ENCODE measurements at regions of chr3 and their contacts with region 1.

Region 1: DNA sequence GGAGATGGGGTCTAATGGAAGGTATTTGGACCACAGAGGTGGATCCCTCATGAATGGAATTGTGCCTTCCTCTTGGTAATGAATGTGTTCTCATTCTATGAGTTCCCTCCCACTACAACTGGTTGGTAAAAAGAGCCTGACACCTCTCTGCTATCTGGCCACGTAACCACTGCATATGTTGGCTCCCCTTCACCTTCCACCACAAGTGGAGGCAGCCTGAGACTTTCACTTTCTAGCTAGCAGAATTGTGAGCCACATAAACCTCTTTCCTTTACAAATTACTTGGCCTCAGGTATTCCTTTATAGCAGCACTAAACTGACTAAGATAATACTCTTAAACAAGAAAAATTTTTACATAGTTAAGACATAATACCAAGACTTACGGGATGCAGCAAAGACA is 155.3 kb downstream of the NR1I2 start:
- DNase-seq: peak; percentile 65
- H3K4me3 Mint-ChIP-seq: peak overlapping the region; percentile 31
- H3K27ac Mint-ChIP-seq: peak overlapping the region; percentile 5
- H3K4me1 Mint-ChIP-seq: peaks cover 42% of the 10 kb centered on the region
- H3K27me3 Mint-ChIP-seq: no peaks in the 10 kb centered on the region

Region 2: DNA sequence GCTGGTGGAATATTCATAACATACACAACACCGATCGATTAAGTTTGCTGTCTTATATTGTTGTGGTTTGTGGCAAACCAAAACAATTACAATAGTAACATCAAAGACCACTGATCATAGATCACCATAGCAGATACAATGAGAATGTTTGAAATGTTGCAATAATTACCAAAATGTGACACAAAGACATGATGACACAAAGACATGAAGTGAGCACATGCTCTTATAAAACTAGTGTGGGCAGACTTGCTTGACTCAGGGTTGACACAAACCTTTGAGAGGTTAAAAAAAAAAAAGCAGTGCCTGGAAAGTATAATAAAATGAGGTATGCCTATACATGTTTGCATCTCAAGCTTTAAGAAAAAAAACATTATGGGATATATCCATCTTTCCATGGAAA is 25.0 kb before region 1 on chr3:
- CTCF ChIA-PET with region 1: no interaction called
- intact Hi-C with region 1: loop called (anchors 2 kb)
- DNase-seq: no peak
- H3K4me3 Mint-ChIP-seq: no peak overlapping the region
- H3K27ac Mint-ChIP-seq: peak overlapping the region; percentile 77
- H3K4me1 Mint-ChIP-seq: peaks cover 33% of the 10 kb centered on the region
- H3K27me3 Mint-ChIP-seq: no peaks in the 10 kb centered on the region

Region 3: GRCh38 chr3:119918992-119919933 is 18.0 kb before region 1 on chr3:
- CTCF ChIA-PET with region 1: no interaction called
- intact Hi-C with region 1: loop called (anchors 1 kb)
- DNase-seq: no peak
- H3K4me3 Mint-ChIP-seq: no peak overlapping the region
- H3K27ac Mint-ChIP-seq: no peak overlapping the region
- H3K4me1 Mint-ChIP-seq: peaks cover 20% of the 10 kb centered on the region
- H3K27me3 Mint-ChIP-seq: no peaks in the 10 kb centered on the region

Region 4: DNA sequence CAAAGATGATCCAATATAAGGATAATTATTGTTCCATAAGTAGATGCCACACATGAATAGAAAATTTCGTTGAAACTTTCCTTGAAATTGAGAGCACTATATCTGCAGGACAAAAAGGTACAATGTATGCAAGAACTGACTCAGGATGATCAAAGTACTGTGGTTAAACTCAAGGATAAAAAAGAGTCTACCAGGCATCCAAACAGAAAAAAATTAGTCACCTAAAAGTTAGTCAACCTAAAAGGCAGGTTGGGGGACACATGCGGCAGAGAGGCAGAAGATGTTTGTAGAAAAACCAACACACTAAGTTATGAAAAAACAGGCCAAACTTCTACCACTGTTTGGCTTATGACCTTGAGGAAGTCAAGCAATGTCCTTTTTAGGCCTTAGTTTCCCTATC is 88.3 kb after region 1 on chr3:
- CTCF ChIA-PET with region 1: no interaction called
- intact Hi-C with region 1: loop called (anchors 5 kb)
- DNase-seq: peak; percentile 27
- H3K4me3 Mint-ChIP-seq: no peak overlapping the region
- H3K27ac Mint-ChIP-seq: peak overlapping the region; percentile 48
- H3K4me1 Mint-ChIP-seq: peaks cover 69% of the 10 kb centered on the region
- H3K27me3 Mint-ChIP-seq: no peaks in the 10 kb centered on the region

Measured in activated naive CD4-positive, alpha-beta T cell treated with anti-CD3 and anti-CD28 coated beads for 36 hours (primary cell).